Calu3 (cell line): ENCODE measurements at regions of chr21 and their contacts with region 1.

Region 1: DNA sequence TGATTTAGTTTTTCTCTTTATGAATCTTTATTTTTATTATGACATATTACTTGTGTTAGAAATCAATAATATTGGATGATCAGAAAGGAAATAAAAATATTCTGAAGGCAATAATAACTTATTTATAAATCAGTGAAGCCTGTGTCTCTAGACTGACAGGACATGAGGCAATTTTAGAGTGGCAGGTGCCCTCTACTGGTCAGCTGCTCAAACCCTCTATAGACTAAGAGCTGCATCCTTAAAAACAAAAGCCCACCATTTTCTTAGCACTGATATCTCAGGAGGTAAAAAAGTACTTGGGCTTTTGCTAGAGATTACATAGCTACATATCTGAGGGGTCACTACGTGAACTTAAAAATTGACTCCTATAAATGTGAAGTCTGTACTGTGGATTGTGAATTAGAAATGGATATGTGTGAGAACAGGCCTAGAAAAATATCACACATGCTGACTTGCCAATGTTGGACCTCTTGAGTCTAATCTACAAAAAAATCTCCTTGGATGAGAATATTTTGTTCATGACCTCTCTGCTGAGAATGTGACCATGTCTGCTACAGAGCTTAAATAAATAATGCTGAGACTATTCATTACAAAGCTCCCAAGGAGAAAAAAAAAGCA is 597.9 kb upstream of the ADAMTS5 start:
- DNase-seq: peak; percentile 41
- H3K4me3 Mint-ChIP-seq: no peak overlapping the region
- H3K27ac Mint-ChIP-seq: no peak overlapping the region
- H3K4me1 Mint-ChIP-seq: peaks cover 13% of the 10 kb centered on the region
- H3K27me3 Mint-ChIP-seq: no peaks in the 10 kb centered on the region
- CTCF ChIP-seq: peak; percentile 25

Region 2: GRCh38 chr21:26850108-26850643 is 714.6 kb before region 1 on chr21:
- CTCF ChIA-PET with region 1: no interaction called
- intact Hi-C with region 1: loop called (anchors 1 kb)
- DNase-seq: no peak
- H3K4me3 Mint-ChIP-seq: no peak overlapping the region
- H3K27ac Mint-ChIP-seq: no peak overlapping the region
- H3K4me1 Mint-ChIP-seq: peaks cover 16% of the 10 kb centered on the region
- H3K27me3 Mint-ChIP-seq: peaks cover 19% of the 10 kb centered on the region
- CTCF ChIP-seq: peak; percentile 49

Region 3: DNA sequence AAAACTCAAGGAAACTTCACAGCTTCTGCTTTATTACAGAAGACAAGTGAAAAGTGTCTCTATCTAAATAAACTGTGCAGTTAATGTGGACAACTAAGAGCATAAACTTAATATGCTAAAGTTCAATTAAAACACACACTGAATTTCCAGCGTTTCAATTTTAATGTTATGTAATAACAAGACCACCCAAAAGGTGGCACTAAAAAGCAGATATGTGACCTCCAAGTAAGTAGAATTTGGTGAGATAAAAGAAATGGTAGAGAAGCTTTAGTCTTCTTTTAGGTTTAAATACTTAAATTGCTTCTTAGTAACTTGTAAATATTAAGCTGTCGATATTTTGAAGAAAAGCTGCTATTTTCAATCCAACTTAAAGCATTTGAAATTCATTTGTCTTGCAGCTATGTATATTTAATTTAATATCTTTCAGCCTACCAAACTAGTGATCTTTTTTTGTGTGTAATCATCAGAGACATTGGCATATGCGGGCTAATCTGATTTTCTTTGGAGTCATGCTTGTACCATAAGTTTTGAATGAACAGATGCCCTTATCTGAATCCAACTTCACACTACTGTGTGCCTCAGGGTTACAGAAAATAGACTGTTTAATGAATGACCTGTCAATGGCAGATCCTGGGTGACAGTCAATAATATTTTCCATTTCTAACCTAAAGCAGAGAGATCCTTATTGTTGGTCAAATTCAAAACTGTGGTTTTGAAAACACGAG is 683.1 kb before region 1 on chr21:
- CTCF ChIA-PET with region 1: no interaction called
- intact Hi-C with region 1: loop called (anchors 1 kb)
- DNase-seq: no peak
- H3K4me3 Mint-ChIP-seq: no peak overlapping the region
- H3K27ac Mint-ChIP-seq: no peak overlapping the region
- H3K4me1 Mint-ChIP-seq: no peaks in the 10 kb centered on the region
- H3K27me3 Mint-ChIP-seq: no peaks in the 10 kb centered on the region
- CTCF ChIP-seq: no peak

Region 4: GRCh38 chr21:27423038-27423437 is 141.8 kb before region 1 on chr21:
- CTCF ChIA-PET with region 1: no interaction called
- intact Hi-C with region 1: loop called (anchors 10 kb)
- DNase-seq: no peak
- H3K4me3 Mint-ChIP-seq: no peak overlapping the region
- H3K27ac Mint-ChIP-seq: no peak overlapping the region
- H3K4me1 Mint-ChIP-seq: peaks cover 24% of the 10 kb centered on the region
- H3K27me3 Mint-ChIP-seq: no peaks in the 10 kb centered on the region
- CTCF ChIP-seq: no peak

Region 5: DNA sequence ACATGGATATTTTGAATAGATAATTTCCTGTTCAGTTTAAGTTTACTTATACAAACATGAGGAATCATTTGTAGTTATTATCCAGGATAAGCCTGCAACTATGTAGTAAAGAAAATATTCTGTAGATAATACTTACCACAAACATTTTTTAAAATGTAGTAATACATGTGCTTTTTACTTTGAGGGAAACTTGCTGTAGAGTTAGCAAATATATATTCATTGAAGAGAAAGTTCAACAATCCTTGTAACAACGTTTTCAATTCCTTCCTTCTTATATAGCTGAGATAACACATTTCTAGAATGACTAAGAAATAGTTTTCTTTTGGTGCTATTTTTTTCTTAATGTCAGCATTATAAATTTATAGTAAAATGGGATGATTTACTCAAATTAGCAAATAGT is 66.7 kb after region 1 on chr21:
- CTCF ChIA-PET with region 1: no interaction called
- intact Hi-C with region 1: no loop called
- DNase-seq: no peak
- H3K4me3 Mint-ChIP-seq: no peak overlapping the region
- H3K27ac Mint-ChIP-seq: no peak overlapping the region
- H3K4me1 Mint-ChIP-seq: no peaks in the 10 kb centered on the region
- H3K27me3 Mint-ChIP-seq: no peaks in the 10 kb centered on the region
- CTCF ChIP-seq: no peak

Region 6: DNA sequence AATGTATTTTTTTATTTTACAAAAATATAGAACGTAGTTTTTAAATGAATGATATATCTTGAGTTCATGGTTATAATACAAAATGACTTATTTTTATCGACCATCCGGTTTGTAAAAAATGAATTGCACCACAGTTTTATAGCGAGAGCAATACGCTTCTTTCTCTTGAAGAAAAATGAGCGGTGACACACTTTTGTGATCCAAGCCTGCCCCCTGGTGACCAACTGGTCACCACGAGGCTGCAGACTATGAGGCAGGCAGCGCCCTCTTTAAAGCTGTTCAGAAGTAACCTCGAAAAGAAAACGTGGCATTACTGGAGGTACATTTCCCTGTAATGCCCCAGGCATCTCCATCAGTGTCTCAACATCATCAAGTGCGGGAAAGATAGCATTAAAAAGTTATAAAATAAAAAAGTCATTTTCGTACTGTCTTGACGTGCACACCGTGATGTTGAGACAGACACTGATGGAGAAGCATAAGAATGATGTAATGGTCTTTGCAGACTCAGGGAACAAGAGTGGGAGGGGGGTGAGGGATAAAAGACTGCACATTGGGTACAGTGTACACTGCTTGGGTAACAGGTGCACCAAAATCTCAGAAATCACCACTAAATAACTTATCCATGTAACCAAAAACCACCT is 136.3 kb after region 1 on chr21:
- CTCF ChIA-PET with region 1: interaction called, 3 read pairs
- intact Hi-C with region 1: loop called (anchors 10 kb)
- DNase-seq: peak; percentile 77
- H3K4me3 Mint-ChIP-seq: no peak overlapping the region
- H3K27ac Mint-ChIP-seq: no peak overlapping the region
- H3K4me1 Mint-ChIP-seq: peaks cover 6% of the 10 kb centered on the region
- H3K27me3 Mint-ChIP-seq: no peaks in the 10 kb centered on the region
- CTCF ChIP-seq: peak; percentile 83